Activated naive CD4-positive, alpha-beta T cell treated with anti-CD3 and anti-CD28 coated beads for 36 hours (primary cell): ENCODE measurements at regions of chr9 and their contacts with region 1.

Region 1: GRCh38 chr9:21031091-21031807 is at the start of gene HACD4:
- DNase-seq: peak; percentile 78
- H3K4me3 Mint-ChIP-seq: peak within 1 kb of the TSS; percentile 49
- H3K27ac Mint-ChIP-seq: peak within 1 kb of the TSS; percentile 69
- H3K4me1 Mint-ChIP-seq: peaks cover 25% of the 10 kb centered on the region
- H3K27me3 Mint-ChIP-seq: no peaks in the 10 kb centered on the region
- total RNA-seq, gene HACD4: 1.1 to 1.6 TPM

Region 2: DNA sequence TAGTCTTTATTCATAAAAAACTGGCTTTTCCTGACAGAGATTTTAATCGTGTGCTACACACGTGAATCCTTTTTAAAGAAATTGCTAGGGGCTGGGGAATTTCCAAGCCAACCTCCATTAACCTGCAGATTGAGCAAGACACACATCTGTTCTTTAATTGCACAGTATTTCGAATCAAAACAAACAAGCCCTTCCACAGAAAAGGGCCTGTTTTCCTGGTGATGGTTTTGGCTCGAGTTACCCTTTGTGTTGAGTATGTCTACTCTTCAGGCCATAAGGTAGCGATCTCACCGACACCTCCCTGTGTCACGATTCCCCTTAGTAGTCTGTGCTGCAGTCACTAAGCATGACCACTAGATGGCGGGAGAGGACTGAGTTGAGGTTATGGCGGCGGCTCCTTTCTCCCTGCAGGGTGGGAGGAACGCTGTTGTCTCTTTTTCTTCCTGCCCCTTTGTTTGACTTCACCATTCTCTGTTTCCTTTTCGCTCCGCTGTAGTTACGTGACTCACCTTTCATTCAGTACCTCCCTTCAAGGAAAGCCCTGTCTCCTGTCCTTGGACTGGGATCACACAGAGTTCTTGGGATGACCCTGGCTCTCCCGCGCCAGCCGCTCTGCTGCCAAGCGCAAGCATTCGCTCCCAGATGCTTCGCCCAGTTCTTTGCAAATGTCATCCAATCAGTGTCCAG is 1105.3 kb before region 1 on chr9:
- CTCF ChIA-PET with region 1: no interaction called
- intact Hi-C with region 1: loop called (anchors 2 kb)
- DNase-seq: peak; percentile 90
- H3K4me3 Mint-ChIP-seq: peak overlapping the region; percentile 57
- H3K27ac Mint-ChIP-seq: no peak overlapping the region
- H3K4me1 Mint-ChIP-seq: peaks cover 18% of the 10 kb centered on the region
- H3K27me3 Mint-ChIP-seq: peaks cover 2% of the 10 kb centered on the region

Region 3: GRCh38 chr9:20558566-20559016 is 472.7 kb before region 1 on chr9:
- CTCF ChIA-PET with region 1: no interaction called
- intact Hi-C with region 1: loop called (anchors 2 kb)
- DNase-seq: peak; percentile 70
- H3K4me3 Mint-ChIP-seq: peak overlapping the region; percentile 36
- H3K27ac Mint-ChIP-seq: peak overlapping the region; percentile 59
- H3K4me1 Mint-ChIP-seq: peaks cover 86% of the 10 kb centered on the region
- H3K27me3 Mint-ChIP-seq: no peaks in the 10 kb centered on the region

Region 4: DNA sequence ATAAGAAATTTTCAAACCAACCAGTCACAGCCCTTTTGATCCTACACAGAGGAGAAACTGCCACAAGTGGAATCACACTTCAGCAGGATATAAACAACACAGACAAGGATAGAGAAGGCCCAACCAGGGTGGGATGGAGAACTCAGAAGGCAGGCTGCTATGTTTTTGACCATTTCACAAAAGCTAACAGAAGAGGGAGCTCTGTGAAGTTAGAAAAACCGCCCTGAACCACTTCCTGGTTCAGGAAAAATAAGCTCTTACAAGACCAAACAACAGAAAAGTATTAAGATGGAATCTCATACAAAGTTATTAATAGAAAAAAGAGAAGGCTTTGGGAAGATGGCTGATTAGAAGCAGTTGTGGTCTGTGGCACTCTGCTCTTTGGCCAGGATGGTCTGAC is 47.5 kb after region 1 on chr9:
- CTCF ChIA-PET with region 1: interaction called, 4 read pairs
- intact Hi-C with region 1: loop called (anchors 1 kb)
- DNase-seq: no peak
- H3K4me3 Mint-ChIP-seq: no peak overlapping the region
- H3K27ac Mint-ChIP-seq: peak overlapping the region; percentile 37
- H3K4me1 Mint-ChIP-seq: peaks cover 27% of the 10 kb centered on the region
- H3K27me3 Mint-ChIP-seq: no peaks in the 10 kb centered on the region

Region 5: GRCh38 chr9:21286659-21287058 is 255.4 kb after region 1 on chr9:
- CTCF ChIA-PET with region 1: no interaction called
- intact Hi-C with region 1: no loop called
- DNase-seq: no peak
- H3K4me3 Mint-ChIP-seq: no peak overlapping the region
- H3K27ac Mint-ChIP-seq: no peak overlapping the region
- H3K4me1 Mint-ChIP-seq: no peaks in the 10 kb centered on the region
- H3K27me3 Mint-ChIP-seq: peaks cover 11% of the 10 kb centered on the region

Region 6: DNA sequence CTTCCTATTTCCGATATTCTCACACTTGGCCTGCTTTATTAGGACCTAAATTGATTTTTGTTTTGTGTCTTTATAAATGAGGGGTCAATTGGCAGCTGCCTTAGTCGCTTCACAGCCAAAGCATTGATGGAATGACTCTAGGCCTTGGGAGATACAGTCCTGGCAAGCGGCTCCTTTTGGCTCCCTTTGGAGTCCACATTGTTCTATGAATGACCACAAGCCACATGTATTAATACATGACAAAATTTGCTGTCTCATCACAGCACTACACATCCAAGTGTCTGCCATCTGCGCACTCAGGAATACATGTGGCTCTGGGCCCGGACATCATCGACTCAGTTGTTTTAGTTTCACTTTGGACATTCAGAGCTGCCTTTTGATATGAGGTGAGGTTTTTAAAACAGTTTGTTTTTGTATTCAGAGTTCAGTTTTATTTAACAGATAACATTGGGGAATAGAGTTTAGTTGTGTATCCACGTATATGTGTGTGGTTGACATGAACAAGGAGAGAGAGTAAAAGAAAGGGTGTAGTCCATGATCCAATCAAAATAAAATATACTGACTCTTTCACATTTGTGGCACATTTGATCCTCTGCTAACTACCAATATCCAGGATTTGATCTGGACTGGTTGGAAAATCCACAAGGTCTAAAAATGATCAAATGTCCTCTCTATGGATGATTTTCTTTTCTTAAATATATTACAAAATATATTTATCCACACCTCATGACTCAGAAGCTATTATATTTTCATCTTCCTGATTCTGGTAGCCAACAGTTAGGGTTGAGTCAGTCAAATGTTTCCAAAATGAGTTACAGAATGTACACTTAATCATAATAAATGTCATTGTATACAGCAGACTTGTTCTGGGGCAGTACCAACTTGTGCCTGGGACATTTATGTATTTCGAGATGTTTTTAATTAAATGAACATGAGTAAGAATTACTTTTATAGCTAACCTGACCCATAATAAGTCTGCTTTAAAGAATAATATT is 657.2 kb after region 1 on chr9:
- CTCF ChIA-PET with region 1: no interaction called
- intact Hi-C with region 1: loop called (anchors 1 kb)
- DNase-seq: no peak
- H3K4me3 Mint-ChIP-seq: no peak overlapping the region
- H3K27ac Mint-ChIP-seq: peak overlapping the region; percentile 17
- H3K4me1 Mint-ChIP-seq: peaks cover 64% of the 10 kb centered on the region
- H3K27me3 Mint-ChIP-seq: no peaks in the 10 kb centered on the region

Region 7: GRCh38 chr9:22097697-22098096 is 1066.4 kb after region 1 on chr9:
- CTCF ChIA-PET with region 1: no interaction called
- intact Hi-C with region 1: no loop called
- DNase-seq: no peak
- H3K4me3 Mint-ChIP-seq: no peak overlapping the region
- H3K27ac Mint-ChIP-seq: no peak overlapping the region
- H3K4me1 Mint-ChIP-seq: peaks cover 2% of the 10 kb centered on the region
- H3K27me3 Mint-ChIP-seq: peaks cover 26% of the 10 kb centered on the region